Panc1 (cell line): ENCODE measurements at regions of chr2 and their contacts with region 1.

Region 1: GRCh38 chr2:148273158-148273691 is 252.3 kb downstream of the MBD5 start:
- DNase-seq: no peak
- ATAC-seq: no peak
- H3K4me3 ChIP-seq: no peak overlapping the region
- H3K27ac ChIP-seq: no peak overlapping the region
- H3K4me1 ChIP-seq: no peaks in the 10 kb centered on the region
- H3K27me3 ChIP-seq: no peaks in the 10 kb centered on the region
- CTCF ChIP-seq: no peak

Region 2: DNA sequence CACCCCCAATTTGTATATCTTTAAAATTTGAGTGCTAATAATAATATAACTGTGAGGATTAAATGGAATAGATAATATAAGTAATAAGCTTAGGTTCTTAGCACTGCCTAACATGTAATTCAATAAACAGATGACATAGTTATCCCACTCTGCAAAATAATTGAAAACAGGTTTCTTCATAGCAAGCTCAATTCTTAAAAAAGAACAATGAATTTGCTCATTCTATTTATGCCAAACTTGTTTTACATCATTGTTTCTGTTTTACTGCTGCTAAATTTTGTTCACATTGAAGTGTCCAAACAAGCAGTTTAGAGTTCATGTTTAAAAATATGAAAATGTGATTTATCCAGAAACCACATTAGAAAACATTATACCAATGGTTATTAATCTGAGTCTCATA is 35.3 kb before region 1 on chr2:
- CTCF ChIA-PET with region 1: no interaction called
- POLR2A ChIA-PET with region 1: interaction called, 11 read pairs
- in situ Hi-C with region 1: no loop called
- intact Hi-C with region 1: no loop called
- DNase-seq: no peak
- ATAC-seq: no peak
- H3K4me3 ChIP-seq: no peak overlapping the region
- H3K27ac ChIP-seq: no peak overlapping the region
- H3K4me1 ChIP-seq: no peaks in the 10 kb centered on the region
- H3K27me3 ChIP-seq: no peaks in the 10 kb centered on the region
- CTCF ChIP-seq: no peak